ENCODE measurements at regions of chr5 and their contacts with region 1.

Region 1: GRCh38 chr5:124748687-124749594 is 2.5 kb upstream of the ZNF608 start:
- DNase-seq: peak; percentile 86
- ATAC-seq: peak; percentile 89
- H3K4me3 ChIP-seq: peak overlapping the region; percentile 83
- H3K27ac ChIP-seq: peak overlapping the region; percentile 94
- H3K4me1 ChIP-seq: peaks cover 3% of the 10 kb centered on the region; the same call in 1 of the 2 replicates
- H3K27me3 ChIP-seq: 0 out of 4 replicates have a peak, but pooled peaks cover 0 to 4% of the 10 kb centered on the region in 2 experiments
- CTCF ChIP-seq: no peak
- EP300 ChIP-seq: no peak
- POLR2A ChIP-seq: peak; percentile 48; the same call in 1 of the 2 replicates
- RAD21 ChIP-seq: no peak

Region 2: DNA sequence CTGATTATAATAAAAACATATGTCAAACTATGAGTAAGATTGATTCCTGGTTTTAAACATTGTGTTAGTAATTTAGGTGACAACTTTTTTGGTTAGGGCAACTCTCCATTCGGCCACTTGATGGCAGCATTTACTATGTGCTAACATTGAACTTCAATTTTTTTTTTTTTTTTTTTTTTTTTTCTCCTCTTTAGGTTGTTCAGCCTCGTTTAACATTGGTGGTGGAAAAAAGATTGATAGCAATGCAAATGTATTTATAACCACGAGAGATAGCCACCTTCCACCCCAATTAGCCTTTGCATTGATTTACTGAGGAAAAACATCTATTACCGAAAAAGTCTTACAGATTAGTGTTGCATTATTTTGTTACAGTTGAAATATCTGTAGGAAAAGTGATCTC is 1077.9 kb before region 1 on chr5:
- CTCF ChIA-PET with region 1: no interaction called
- POLR2A ChIA-PET with region 1: no interaction called
- RAD21 ChIA-PET with region 1: no interaction called
- SMC1A ChIA-PET with region 1: interaction called, 3 read pairs
- in situ Hi-C with region 1: no loop called
- intact Hi-C with region 1: loop called (anchors 10 kb)
- DNase-seq: no peak
- ATAC-seq: peak; percentile 27; the same call in 2 of the 3 replicates
- H3K4me3 ChIP-seq: no peak overlapping the region
- H3K27ac ChIP-seq: no peak overlapping the region
- H3K4me1 ChIP-seq: no peaks in the 10 kb centered on the region
- H3K27me3 ChIP-seq: no peaks in the 10 kb centered on the region
- CTCF ChIP-seq: peak; percentile 71 to 74 (median 72)
- EP300 ChIP-seq: no peak
- POLR2A ChIP-seq: no peak
- RAD21 ChIP-seq: peak; percentile 89

Region 3: GRCh38 chr5:124706729-124707361 is 42.1 kb before region 1 on chr5:
- CTCF ChIA-PET with region 1: interaction called, 3 read pairs
- POLR2A ChIA-PET with region 1: interaction called, 4 read pairs
- RAD21 ChIA-PET with region 1: interaction called, 11 read pairs
- SMC1A ChIA-PET with region 1: interaction called, 27 read pairs
- in situ Hi-C with region 1: no loop called
- intact Hi-C with region 1: no loop called
- DNase-seq: no peak
- ATAC-seq: no peak
- H3K4me3 ChIP-seq: peak overlapping the region; percentile 16; the same call in 1 of the 2 replicates
- H3K27ac ChIP-seq: peak overlapping the region; percentile 78
- H3K4me1 ChIP-seq: peaks cover 61% of the 10 kb centered on the region
- H3K27me3 ChIP-seq: no peaks in the 10 kb centered on the region
- CTCF ChIP-seq: no peak
- EP300 ChIP-seq: no peak
- POLR2A ChIP-seq: no peak
- RAD21 ChIP-seq: no peak

Region 4: GRCh38 chr5:124790895-124791732 is 42.2 kb after region 1 on chr5:
- CTCF ChIA-PET with region 1: interaction called, 6 read pairs
- POLR2A ChIA-PET with region 1: interaction called, 3 read pairs
- RAD21 ChIA-PET with region 1: interaction called, 7 read pairs
- SMC1A ChIA-PET with region 1: interaction called, 17 read pairs
- in situ Hi-C with region 1: no loop called
- intact Hi-C with region 1: no loop called
- DNase-seq: no peak
- ATAC-seq: no peak
- H3K4me3 ChIP-seq: no peak overlapping the region
- H3K27ac ChIP-seq: no peak overlapping the region
- H3K4me1 ChIP-seq: peaks cover 14% of the 10 kb centered on the region
- H3K27me3 ChIP-seq: no peaks in the 10 kb centered on the region
- CTCF ChIP-seq: no peak
- EP300 ChIP-seq: no peak
- POLR2A ChIP-seq: no peak
- RAD21 ChIP-seq: no peak

Region 5: DNA sequence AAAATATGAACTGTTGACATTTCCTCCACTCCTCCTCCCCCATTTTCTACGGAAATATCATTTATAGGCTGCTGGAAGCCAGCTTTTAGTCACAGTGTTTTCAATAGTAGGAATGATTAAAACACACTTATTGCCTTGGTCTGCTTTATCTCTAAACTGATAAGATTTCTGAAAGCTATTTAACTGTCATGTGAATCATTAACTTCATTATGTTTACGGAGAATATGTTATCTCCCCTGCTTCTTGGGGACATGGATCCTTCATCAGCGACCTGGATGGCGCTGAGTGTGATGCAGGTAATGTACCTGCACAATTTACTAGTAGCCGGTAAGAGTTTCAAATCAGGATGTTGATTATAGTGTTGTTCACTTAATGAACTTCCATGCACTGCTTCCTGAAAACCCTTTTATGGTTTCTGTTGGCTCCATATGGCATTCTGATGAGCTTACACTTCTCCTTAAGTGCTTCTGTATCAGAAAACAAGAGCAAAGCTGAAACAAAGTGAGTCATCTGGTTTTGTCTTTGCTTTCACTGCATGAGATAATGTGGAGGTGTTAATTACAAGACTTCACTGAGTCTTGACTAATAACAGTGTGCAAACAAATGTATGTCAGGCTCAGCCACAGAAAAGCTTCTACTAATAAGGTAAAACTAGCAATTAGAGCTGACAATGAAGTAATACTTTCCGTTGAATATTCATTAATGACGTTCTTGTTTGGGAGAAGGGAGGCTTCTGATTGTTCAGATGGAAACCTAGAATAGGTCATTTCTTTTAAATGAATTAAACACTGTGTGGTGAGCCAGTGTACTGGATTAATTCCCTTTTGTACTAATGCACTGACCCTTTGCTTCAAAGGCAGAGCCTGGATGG is 159.9 kb after region 1 on chr5:
- CTCF ChIA-PET with region 1: interaction called, 8 read pairs
- POLR2A ChIA-PET with region 1: interaction called, 16 read pairs
- RAD21 ChIA-PET with region 1: interaction called, 74 read pairs
- SMC1A ChIA-PET with region 1: interaction called, 65 read pairs
- in situ Hi-C with region 1: loop called (anchors 5 kb)
- intact Hi-C with region 1: no loop called
- DNase-seq: peak; percentile 75
- ATAC-seq: peak; percentile 88
- H3K4me3 ChIP-seq: no peak overlapping the region
- H3K27ac ChIP-seq: peak overlapping the region; percentile 51
- H3K4me1 ChIP-seq: peaks cover 41% of the 10 kb centered on the region
- H3K27me3 ChIP-seq: no peaks in the 10 kb centered on the region
- CTCF ChIP-seq: no peak
- EP300 ChIP-seq: peak; percentile 96 to 98
- POLR2A ChIP-seq: no peak
- RAD21 ChIP-seq: peak; percentile 20; the same call in 1 of the 2 replicates

Region 6: GRCh38 chr5:125006011-125006685 is 257.2 kb after region 1 on chr5:
- CTCF ChIA-PET with region 1: interaction called, 3 read pairs
- POLR2A ChIA-PET with region 1: interaction called, 4 read pairs
- RAD21 ChIA-PET with region 1: interaction called, 19 read pairs
- SMC1A ChIA-PET with region 1: interaction called, 6 read pairs
- in situ Hi-C with region 1: no loop called
- intact Hi-C with region 1: loop called (anchors 2 kb)
- DNase-seq: peak; percentile 71
- ATAC-seq: peak; percentile 82
- H3K4me3 ChIP-seq: 0 out of 2 replicates have a peak overlapping the region, but pooled peaks have one; percentile 0
- H3K27ac ChIP-seq: peak overlapping the region; percentile 69
- H3K4me1 ChIP-seq: peaks cover 18% of the 10 kb centered on the region
- H3K27me3 ChIP-seq: no peaks in the 10 kb centered on the region
- CTCF ChIP-seq: no peak
- EP300 ChIP-seq: peak; percentile 92 to 95
- POLR2A ChIP-seq: no peak
- RAD21 ChIP-seq: peak; percentile 36

Measured in GM12878 (cell line).